AG04449 (cell line): ENCODE measurements at regions of chr19 and their contacts with region 1.

Region 1: GRCh38 chr19:16041299-16041990 is 34.9 kb upstream of the TPM4 start:
- DNase-seq: peak; percentile 12
- H3K4me3 ChIP-seq: peak overlapping the region; percentile 12
- CTCF ChIP-seq: peak; percentile 93

Region 2: GRCh38 chr19:16025108-16026101 is 16.0 kb before region 1 on chr19:
- CTCF ChIA-PET with region 1: interaction called, 39 read pairs
- POLR2A ChIA-PET with region 1: no interaction called
- DNase-seq: peak; percentile 14
- H3K4me3 ChIP-seq: no peak overlapping the region
- CTCF ChIP-seq: peak; percentile 64

Region 3: GRCh38 chr19:16076154-16076957 is 34.9 kb after region 1 on chr19 and contains the start of gene TPM4:
- CTCF ChIA-PET with region 1: interaction called, 24 read pairs
- POLR2A ChIA-PET with region 1: interaction called, 4 read pairs
- DNase-seq: peak; percentile 79
- H3K4me3 ChIP-seq: peak within 1 kb of the TSS; percentile 97
- CTCF ChIP-seq: no peak

Region 4: DNA sequence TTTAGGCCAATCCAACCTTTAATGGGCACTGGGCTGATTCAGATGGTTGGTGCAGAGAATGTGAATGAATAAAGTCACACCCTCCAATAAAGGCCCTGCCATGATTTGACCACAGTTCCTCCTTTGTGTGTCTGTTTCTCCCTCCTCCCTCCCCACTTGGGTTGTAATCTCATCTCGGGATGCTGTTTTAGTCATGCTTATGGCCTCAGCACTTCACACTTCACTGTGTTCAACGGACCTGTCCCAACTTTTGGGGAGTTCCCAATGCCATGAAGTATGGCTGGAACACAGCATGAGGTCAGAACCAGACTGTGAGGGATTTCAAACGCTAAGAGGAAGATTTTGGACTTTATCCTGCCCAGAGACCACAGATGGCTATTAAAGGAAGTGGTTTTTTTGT is 64.7 kb after region 1 on chr19:
- CTCF ChIA-PET with region 1: interaction called, 46 read pairs
- POLR2A ChIA-PET with region 1: interaction called, 4 read pairs
- DNase-seq: no peak
- H3K4me3 ChIP-seq: no peak overlapping the region
- CTCF ChIP-seq: no peak

Region 5: GRCh38 chr19:16153582-16154336 is 112.3 kb after region 1 on chr19:
- CTCF ChIA-PET with region 1: no interaction called
- POLR2A ChIA-PET with region 1: no interaction called
- DNase-seq: no peak
- H3K4me3 ChIP-seq: no peak overlapping the region
- CTCF ChIP-seq: no peak

Region 6: DNA sequence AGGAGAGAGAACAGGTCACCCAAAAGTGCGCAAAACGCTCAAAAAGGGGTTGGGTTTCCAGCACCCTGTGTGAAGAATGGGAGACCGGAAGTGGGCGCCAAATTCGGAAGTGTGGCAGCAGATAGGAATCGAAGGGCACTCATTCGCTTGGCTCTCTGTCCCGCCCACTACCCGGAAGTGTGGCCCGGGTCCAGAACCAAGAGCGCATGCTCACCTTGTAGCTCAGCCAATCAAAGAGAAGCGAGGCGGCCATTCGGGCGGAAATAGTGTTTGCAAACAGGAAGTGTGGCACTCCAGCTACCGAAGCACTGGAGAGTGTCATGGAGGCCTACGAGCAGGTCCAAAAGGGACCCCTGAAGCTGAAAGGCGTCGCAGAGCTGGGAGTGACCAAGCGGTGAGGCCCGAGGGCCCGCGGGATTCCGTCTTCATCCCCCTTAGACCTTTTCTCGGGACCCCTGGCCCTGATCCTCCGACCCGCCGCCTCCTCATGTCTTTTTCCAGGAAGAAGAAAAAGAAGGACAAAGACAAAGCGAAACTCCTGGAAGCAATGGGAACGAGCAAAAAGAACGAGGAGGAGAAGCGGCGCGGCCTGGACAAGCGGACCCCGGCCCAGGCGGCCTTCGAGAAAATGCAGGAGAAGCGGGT is 143.8 kb after region 1 on chr19 and contains the start of gene FAM32A:
- CTCF ChIA-PET with region 1: interaction called, 101 read pairs
- POLR2A ChIA-PET with region 1: interaction called, 9 read pairs
- DNase-seq: peak; percentile 95
- H3K4me3 ChIP-seq: peak within 1 kb of the TSS; percentile 95
- CTCF ChIP-seq: peak; percentile 5

Region 7: DNA sequence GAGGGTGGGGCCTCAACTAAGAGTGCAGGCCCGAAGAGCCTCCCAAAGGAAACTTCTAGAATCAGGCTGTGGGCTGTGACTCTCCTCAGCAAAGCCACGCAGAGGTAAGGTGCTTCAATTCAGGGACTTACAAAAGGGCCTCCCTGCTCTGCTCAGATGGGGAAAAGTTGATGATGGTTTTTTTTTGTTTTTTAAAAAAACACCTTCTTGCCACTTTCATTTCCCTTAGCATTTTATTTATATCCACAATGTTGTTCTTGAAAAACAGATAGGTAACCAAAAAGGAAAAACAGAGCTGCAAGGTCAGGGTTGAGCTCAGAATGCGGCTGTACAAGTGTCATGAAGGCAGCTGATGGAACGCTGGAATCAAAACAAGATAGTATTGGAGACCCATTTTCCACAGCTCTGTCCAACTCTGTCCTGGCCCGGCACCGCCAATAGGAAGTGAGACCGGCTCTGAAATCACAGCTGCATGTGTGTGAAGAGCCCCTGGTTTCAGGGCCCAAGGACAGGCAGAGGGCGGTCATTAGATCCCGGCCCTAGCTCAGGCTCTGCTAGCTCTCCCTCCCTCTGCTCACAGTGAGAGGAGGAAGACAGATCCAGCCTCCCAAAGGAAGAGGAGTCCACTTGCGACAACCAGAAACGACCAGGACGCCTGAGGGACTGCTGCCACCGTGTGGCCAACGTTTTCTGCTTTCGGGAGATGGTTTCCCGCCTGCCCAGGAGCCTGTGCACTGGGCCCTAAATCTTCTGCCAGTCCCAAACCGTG is 341.5 kb after region 1 on chr19:
- CTCF ChIA-PET with region 1: interaction called, 15 read pairs
- POLR2A ChIA-PET with region 1: no interaction called
- DNase-seq: peak; percentile 33
- H3K4me3 ChIP-seq: no peak overlapping the region
- CTCF ChIP-seq: peak; percentile 91